Left lung (tissue), 14 donors: ENCODE measurements at regions of chr20 and their contacts with region 1.

Region 1: GRCh38 chr20:45362804-45363610 is at the start of gene SYS1:
- DNase-seq: peak; percentile 98 to 100 (median 99)
- ATAC-seq: peak; percentile 90
- H3K4me3 ChIP-seq: peak within 1 kb of the TSS; percentile 72 to 77
- H3K27ac ChIP-seq: peak within 1 kb of the TSS; percentile 94 to 97
- H3K4me1 ChIP-seq: peaks cover 36 to 85% of the 10 kb centered on the region in 2 donors
- H3K27me3 ChIP-seq: no peaks in the 10 kb centered on the region
- CTCF ChIP-seq: peak; percentile 69 to 81
- polyA plus RNA-seq, gene SYS1: 20.8 to 27.3 (median 23.1) TPM

Region 2: GRCh38 chr20:45436732-45437391 is 73.9 kb after region 1 on chr20:
- intact Hi-C with region 1: loop called in 1 of 2 experiments (anchors 2 kb)
- DNase-seq: peak; percentile 69 to 98 (median 86)
- ATAC-seq: peak; percentile 100
- H3K4me3 ChIP-seq: peak overlapping the region; percentile 28 to 41
- H3K27ac ChIP-seq: peak overlapping the region; percentile 27 to 68
- H3K4me1 ChIP-seq: peaks cover 0 to 8% of the 10 kb centered on the region in 2 donors
- H3K27me3 ChIP-seq: no peaks in the 10 kb centered on the region
- CTCF ChIP-seq: peak; percentile 90 to 95